A549 (cell line): ENCODE measurements at regions of chr9 and their contacts with region 1.

Region 1: DNA sequence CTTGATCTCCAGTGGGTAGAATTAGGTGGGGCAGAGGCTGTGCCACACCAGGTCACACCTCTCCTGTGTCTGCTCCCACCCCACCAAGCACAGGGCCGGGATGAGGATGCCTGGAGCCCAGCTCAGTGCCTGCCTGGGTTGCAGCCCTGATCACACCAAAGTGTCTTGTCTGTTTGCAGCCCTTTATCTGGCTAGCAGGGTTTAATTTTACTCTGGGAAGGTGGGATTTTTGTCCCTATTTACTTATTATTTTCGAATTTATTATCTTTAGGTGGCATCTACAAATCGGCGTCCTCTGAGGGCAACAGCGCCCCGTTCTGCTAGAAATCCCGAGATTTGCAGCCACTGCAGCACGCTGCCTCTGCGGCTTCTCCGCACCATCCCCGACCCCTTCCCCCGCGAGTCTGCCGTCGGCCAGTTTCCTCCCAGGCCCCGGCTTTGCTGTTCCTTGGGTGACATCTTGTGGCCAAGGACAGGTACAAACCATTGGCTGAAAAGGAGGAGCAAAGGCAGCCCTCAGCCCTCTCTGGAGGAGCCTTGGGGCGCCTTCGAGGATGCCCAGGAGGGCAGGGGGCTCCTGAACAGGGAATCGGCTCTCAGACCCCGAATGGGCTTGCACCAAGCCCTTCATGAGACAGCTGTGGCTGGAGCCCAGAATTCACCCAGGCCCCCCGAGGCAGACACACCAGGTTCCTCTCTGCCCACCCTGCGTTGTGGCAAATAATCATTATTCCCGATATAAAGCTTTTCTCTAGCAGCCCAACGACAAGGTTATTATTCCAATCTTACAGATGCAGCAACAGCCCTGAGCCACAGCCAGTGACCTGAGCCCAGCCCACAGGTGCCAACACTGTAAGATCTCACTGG is 113.0 kb downstream of the GAPVD1 start:
- DNase-seq: peak; percentile 72 to 77
- ATAC-seq: peak; percentile 85 to 94
- H3K4me3 ChIP-seq: peak overlapping the region; percentile 27; the same call in 2 of the 3 replicates
- H3K27ac ChIP-seq: peak overlapping the region in 1 of 2 experiments; percentile 55; a peak in 2 of 6 replicates
- H3K4me1 ChIP-seq: peaks cover 7% of the 10 kb centered on the region; the same call in 2 of the 3 replicates
- CTCF ChIP-seq: peak; percentile 91
- EP300 ChIP-seq: no peak
- POLR2A ChIP-seq: no peak
- RAD21 ChIP-seq: peak; percentile 98

Region 2: GRCh38 chr9:125190361-125190801 is 184.3 kb before region 1 on chr9:
- CTCF ChIA-PET with region 1: no interaction called
- POLR2A ChIA-PET with region 1: no interaction called
- DNase-seq: no peak
- ATAC-seq: peak; percentile 3 to 30; a peak in 4 of 6 replicates
- H3K4me3 ChIP-seq: peak overlapping the region; percentile 75
- H3K27ac ChIP-seq: peak overlapping the region; percentile 88
- H3K4me1 ChIP-seq: peaks cover 20% of the 10 kb centered on the region; the same call in 2 of the 3 replicates
- CTCF ChIP-seq: no peak
- EP300 ChIP-seq: no peak
- POLR2A ChIP-seq: no peak
- RAD21 ChIP-seq: no peak

Region 3: GRCh38 chr9:125361837-125362531 is 12.7 kb before region 1 on chr9:
- CTCF ChIA-PET with region 1: interaction called, 25 read pairs
- POLR2A ChIA-PET with region 1: no interaction called
- DNase-seq: peak in 1 of 2 experiments; percentile 51
- ATAC-seq: peak; percentile 50 to 75; a peak in 5 of 6 replicates
- H3K4me3 ChIP-seq: no peak overlapping the region
- H3K27ac ChIP-seq: no peak overlapping the region
- H3K4me1 ChIP-seq: no peaks in the 10 kb centered on the region
- CTCF ChIP-seq: peak; percentile 22; the same call in 1 of the 3 replicates
- EP300 ChIP-seq: no peak
- POLR2A ChIP-seq: no peak
- RAD21 ChIP-seq: peak in 1 of 2 experiments; percentile 26; a peak in 1 of 5 replicates

Region 4: DNA sequence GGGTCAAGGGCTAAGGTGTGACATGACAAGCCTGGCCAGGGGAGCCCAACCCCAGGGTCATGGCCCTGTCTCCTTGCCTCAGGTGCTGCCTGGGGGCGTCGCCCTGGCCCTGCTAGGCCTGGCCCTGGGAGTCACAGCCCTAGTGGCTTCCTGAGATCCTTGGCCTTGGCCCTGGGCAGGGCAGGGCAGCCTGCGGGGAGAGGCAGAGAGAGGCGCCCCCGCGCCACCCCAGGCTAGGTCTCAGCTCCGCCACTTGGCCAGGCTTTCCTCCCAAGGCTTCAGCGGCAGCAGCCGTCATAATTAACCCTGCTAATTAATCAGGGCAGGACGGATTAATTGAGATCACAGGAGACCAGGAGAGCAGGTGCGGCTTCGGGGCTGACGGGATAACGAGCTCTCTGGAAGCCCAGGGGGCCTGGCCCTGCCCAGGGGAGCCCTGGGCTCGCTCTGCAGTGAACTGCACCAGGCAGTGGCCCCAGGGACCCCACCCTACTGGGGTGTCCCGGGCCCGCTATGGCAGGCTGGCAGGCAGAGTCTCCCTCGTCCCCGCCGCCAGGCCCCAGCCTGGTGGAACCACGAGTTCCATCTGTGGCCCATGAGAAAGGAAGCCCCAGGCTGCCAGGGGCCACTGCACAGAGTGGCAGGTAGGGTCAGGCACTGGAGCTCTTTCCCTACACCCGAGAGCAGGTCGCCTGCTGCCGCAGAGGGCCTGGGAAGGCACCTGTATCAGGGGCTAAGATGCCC is 642.0 kb after region 1 on chr9:
- CTCF ChIA-PET with region 1: no interaction called
- POLR2A ChIA-PET with region 1: no interaction called
- DNase-seq: no peak
- ATAC-seq: peak in 1 of 2 experiments; percentile 29; a peak in 2 of 6 replicates
- H3K4me3 ChIP-seq: no peak overlapping the region
- H3K27ac ChIP-seq: no peak overlapping the region
- H3K4me1 ChIP-seq: no peaks in the 10 kb centered on the region
- CTCF ChIP-seq: no peak
- EP300 ChIP-seq: no peak
- POLR2A ChIP-seq: no peak
- RAD21 ChIP-seq: no peak